ENCODE measurements at regions of chr11 and their contacts with region 1.

Region 1: DNA sequence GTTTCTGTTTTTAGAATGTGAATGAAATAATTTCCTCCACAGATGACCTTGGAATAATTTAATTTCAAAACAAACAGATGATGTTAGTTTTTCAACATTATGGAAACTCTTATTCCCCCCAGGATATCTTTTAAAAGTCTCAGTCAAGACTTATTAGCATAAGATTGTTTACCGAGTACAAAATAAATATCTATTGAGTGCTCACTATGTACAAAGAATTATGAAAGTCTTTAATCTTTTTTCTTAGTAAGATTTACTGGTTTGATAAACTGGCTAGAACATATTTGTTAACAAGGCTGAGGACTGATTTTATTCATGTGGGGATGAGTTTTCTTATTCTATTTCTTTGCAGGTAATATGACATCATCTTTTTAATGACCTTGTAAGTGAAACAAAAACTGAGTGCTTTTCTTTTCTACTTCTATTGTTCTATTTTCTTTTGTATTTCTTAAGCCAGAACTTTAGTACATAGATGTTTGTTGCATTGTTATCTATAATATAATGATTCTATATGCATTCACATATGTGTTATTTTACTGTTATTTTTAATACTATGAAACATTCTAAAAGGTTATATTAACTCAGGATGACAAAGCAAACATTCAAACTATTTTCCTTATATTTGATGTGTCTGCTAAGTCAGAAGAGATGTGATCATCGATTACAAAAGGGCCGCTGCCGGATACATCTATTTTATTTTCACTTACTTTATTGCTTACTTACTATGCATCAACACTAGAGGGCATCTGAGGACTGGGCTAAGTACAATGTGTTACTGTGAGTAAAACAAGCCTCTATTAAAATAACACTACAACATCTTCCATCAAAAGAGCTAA is 111.0 kb upstream of the ARHGAP42 start:
- DNase-seq: peak; percentile 80
- H3K4me3 ChIP-seq: no peak overlapping the region
- H3K27ac ChIP-seq: no peak overlapping the region
- H3K4me1 ChIP-seq: peaks cover 18% of the 10 kb centered on the region
- H3K27me3 ChIP-seq: no peaks in the 10 kb centered on the region
- CTCF ChIP-seq: peak; percentile 87

Region 2: DNA sequence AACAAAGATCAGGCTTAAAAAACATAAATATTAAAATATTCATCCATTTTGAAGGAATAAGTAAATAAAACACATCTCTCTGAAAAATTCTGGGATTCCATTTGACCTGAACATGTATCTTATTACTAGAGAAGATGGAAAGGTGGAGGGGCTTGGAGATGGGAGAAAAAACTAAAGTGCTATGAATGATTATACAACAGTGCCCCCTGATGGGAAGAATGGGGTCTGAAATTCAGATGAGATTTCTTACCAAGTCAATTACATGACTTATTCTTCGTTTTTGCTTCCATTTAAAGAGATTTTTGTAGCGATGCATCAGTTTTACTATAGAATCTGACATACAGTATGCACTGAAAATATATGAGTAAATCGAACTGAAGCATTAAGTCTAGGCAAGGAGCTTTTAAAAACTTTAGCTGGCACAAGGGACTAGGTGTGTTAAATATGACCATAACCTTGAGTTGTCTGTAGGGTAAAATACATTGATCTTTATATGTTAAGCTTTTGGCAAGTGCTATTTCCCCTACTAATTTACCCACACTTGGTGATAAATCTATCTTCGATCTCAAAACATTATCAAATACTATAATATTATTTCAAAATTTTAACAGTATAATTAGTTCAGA is 836.5 kb before region 1 on chr11:
- CTCF ChIA-PET with region 1: no interaction called
- POLR2A ChIA-PET with region 1: no interaction called
- intact Hi-C with region 1: loop called (anchors 2 kb)
- DNase-seq: peak; percentile 80
- H3K4me3 ChIP-seq: no peak overlapping the region
- H3K27ac ChIP-seq: no peak overlapping the region
- H3K4me1 ChIP-seq: peaks cover 4% of the 10 kb centered on the region
- H3K27me3 ChIP-seq: no peaks in the 10 kb centered on the region
- CTCF ChIP-seq: peak; percentile 84

Region 3: GRCh38 chr11:100671483-100671882 is 95.4 kb after region 1 on chr11:
- CTCF ChIA-PET with region 1: no interaction called
- POLR2A ChIA-PET with region 1: no interaction called
- intact Hi-C with region 1: no loop called
- DNase-seq: no peak
- H3K4me3 ChIP-seq: no peak overlapping the region
- H3K27ac ChIP-seq: no peak overlapping the region
- H3K4me1 ChIP-seq: no peaks in the 10 kb centered on the region
- H3K27me3 ChIP-seq: no peaks in the 10 kb centered on the region
- CTCF ChIP-seq: no peak

Region 4: GRCh38 chr11:100827934-100828661 is 252.0 kb after region 1 on chr11:
- CTCF ChIA-PET with region 1: interaction called, 12 read pairs
- POLR2A ChIA-PET with region 1: no interaction called
- intact Hi-C with region 1: no loop called
- DNase-seq: peak; percentile 41
- H3K4me3 ChIP-seq: no peak overlapping the region
- H3K27ac ChIP-seq: no peak overlapping the region
- H3K4me1 ChIP-seq: peaks cover 29% of the 10 kb centered on the region
- H3K27me3 ChIP-seq: no peaks in the 10 kb centered on the region
- CTCF ChIP-seq: peak; percentile 29

Region 5: GRCh38 chr11:100930185-100930778 is 354.2 kb after region 1 on chr11:
- CTCF ChIA-PET with region 1: interaction called, 5 read pairs
- POLR2A ChIA-PET with region 1: no interaction called
- intact Hi-C with region 1: loop called (anchors 1 kb)
- DNase-seq: peak; percentile 82
- H3K4me3 ChIP-seq: no peak overlapping the region
- H3K27ac ChIP-seq: no peak overlapping the region
- H3K4me1 ChIP-seq: peaks cover 4% of the 10 kb centered on the region
- H3K27me3 ChIP-seq: no peaks in the 10 kb centered on the region
- CTCF ChIP-seq: peak; percentile 77

Measured in A673 (cell line).